Sciatic nerve (tissue), 2 donors: ENCODE measurements at regions of chr10 and their contacts with region 1.

Region 1: GRCh38 chr10:64973391-64973790 is 1452.2 kb downstream of the REEP3 start:
- DNase-seq: no peak
- ATAC-seq: no peak

Region 2: GRCh38 chr10:64234489-64234888 is 738.9 kb before region 1 on chr10:
- intact Hi-C with region 1: loop called (anchors 5 kb)
- DNase-seq: no peak
- ATAC-seq: no peak

Region 3: DNA sequence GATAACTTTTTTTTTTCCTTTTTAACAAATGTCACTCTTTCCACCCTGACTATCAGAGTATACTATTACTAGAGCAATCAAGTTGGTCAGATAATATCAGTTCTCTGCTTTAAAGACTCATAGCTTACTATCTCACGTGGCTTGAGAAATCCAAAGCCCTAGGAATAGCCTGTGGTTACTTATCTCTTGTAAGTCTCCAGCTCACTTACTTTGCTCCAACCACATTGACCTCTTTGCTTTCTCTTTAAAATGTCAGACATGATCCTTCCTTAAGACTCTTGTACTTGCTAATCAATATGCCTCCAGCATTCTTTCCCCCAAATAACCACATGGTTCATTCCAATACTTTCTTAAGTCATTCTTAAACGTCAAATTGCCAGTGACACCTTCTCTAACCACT is 160.0 kb before region 1 on chr10:
- intact Hi-C with region 1: no loop called
- DNase-seq: no peak
- ATAC-seq: no peak

Region 4: GRCh38 chr10:64873959-64874358 is 99.4 kb before region 1 on chr10:
- intact Hi-C with region 1: no loop called
- DNase-seq: no peak
- ATAC-seq: no peak